Posterior vena cava (tissue), 2 donors: ENCODE measurements at regions of chr21 and their contacts with region 1.

Region 1: DNA sequence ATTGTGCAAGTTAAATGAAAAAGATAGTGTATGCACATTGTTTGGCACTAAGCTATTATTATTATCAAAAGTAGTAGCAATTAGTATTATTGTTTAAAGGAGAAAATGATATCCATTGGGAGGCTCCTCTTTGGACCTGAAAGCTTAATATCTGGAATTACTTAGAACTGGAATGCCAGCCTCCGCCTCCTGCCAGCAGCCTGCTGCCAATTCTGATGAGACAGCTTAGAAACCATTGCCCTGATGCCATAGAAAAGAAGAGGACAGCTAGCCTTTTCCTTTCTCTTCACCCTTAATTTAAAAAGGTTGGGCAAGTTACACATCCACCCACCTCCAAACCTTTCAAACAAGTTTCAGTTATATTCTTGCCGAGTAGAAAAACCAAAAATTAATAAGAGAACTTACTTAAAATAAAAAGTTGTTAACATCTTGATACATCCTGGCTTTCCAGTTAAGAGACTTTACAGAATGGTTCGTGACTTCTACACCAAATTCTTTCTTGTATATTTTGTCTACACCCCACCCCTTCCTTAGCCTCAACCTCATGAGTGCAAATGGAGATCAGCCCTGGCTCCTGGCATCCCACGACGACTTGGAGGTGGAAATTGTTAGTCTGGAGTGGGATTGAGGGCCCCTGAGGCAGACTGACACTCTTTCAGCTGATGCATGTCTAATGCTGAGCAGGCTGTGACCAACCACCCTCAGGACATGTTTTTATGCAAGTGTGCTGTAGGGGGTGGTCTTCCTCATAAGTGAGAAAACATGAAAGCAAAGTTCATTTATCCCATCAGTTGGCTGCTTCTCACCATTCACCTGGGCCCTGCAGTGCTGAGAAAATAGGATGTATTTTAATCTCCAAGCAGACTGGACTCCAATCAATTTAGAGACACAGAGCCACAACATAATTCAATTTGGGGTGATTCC is 120.6 kb downstream of the KCNJ15 start:
- DNase-seq: no peak

Region 2: GRCh38 chr21:38092051-38092450 is 285.4 kb before region 1 on chr21:
- intact Hi-C with region 1: loop called in 1 of 2 experiments (anchors 5 kb)
- DNase-seq: no peak

Region 3: DNA sequence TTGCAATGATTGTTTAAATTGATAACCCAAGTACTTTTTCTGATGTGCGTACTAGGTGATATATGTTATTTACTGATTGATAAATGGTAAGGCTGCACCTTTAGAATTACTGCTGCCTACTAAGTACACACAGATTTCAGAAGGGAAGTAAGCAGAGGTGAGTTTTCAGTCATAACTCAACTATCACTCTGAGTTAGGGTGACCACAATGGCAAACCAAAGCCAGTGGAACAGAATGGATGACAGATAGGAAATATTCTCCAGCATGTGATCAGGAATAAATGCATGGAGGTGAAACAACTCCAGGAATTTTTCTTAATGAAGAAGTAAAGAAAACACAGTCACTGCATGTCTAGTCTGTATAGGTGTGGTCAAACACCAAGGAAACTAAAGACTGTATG is 128.2 kb before region 1 on chr21:
- intact Hi-C with region 1: no loop called
- DNase-seq: no peak

Region 4: DNA sequence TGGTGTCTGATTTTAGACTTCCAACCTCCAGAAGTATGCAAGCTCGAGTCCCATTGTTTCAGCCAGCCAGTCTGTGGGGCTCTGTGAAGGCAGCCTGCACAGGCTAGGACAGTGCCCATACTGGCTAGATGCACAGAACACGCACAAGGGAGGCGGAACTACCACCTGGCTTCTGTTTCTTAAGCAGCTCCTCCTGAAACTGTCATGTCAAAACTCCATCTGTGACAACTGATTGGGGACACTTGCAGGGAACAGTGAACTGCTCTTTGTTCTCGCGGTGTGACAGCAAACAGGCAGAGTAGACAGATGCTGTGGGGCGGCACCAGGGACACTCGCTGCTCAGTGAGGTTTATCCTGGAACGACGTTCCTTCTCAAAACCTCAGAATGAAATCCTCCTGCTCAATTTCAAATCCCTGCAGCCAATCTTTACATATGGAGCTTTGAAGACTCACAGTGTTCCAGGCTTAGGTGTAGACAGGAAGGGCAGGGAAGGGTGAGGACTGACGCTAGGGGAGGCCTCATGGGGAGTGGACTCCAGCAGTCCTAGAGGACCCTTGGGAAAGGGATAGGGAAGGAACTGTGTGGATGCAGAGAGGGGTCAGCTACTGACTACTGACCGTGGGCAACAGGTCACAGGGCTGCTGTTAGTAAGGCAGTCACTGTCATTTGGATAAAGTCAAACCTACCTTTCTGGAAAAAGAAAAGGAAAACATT is 47.0 kb after region 1 on chr21:
- intact Hi-C with region 1: no loop called
- DNase-seq: no peak